ENCODE measurements at regions of chr1 and their contacts with region 1.

Region 1: GRCh38 chr1:149997585-149998262 is 12.8 kb downstream of the OTUD7B start:
- DNase-seq: peak; percentile 97
- ATAC-seq: peak; percentile 89
- H3K4me3 ChIP-seq: peak overlapping the region; percentile 39
- H3K27ac ChIP-seq: peak overlapping the region; percentile 55
- H3K4me1 ChIP-seq: peaks cover 31% of the 10 kb centered on the region; the same call in 1 of the 2 replicates
- H3K27me3 ChIP-seq: no peaks in the 10 kb centered on the region
- CTCF ChIP-seq: no peak
- EP300 ChIP-seq: peak; percentile 86 to 94; a peak in 3 of 4 replicates
- POLR2A ChIP-seq: no peak
- RAD21 ChIP-seq: no peak

Region 2: GRCh38 chr1:150010393-150011115 is 12.8 kb after region 1 on chr1 and contains the start of gene OTUD7B:
- CTCF ChIA-PET with region 1: interaction called, 10 read pairs
- POLR2A ChIA-PET with region 1: interaction called, 28 read pairs
- RAD21 ChIA-PET with region 1: interaction called, 29 read pairs
- SMC1A ChIA-PET with region 1: interaction called, 73 read pairs
- in situ Hi-C with region 1: no loop called
- intact Hi-C with region 1: no loop called
- DNase-seq: no peak
- ATAC-seq: peak; percentile 91
- H3K4me3 ChIP-seq: peak within 1 kb of the TSS; percentile 99
- H3K27ac ChIP-seq: peak within 1 kb of the TSS; percentile 84
- H3K4me1 ChIP-seq: no peaks in the 10 kb centered on the region
- H3K27me3 ChIP-seq: no peaks in the 10 kb centered on the region
- CTCF ChIP-seq: 0 out of 6 replicates have a peak, but pooled peaks of 2 of the 3 experiments have one; percentile 2 to 3
- EP300 ChIP-seq: peak in 1 of 2 experiments; percentile 28; a peak in 1 of 4 replicates
- POLR2A ChIP-seq: peak; percentile 85
- RAD21 ChIP-seq: no peak
- polyA plus RNA-seq, gene OTUD7B: 1.7 to 1.8 TPM